Astrocyte of the cerebellum (primary cell): ENCODE measurements at regions of chr3 and their contacts with region 1.

Region 1: GRCh38 chr3:42264399-42265058 is 1.5 kb downstream of the CCK start:
- DNase-seq: no peak
- H3K4me3 ChIP-seq: no peak overlapping the region
- CTCF ChIP-seq: no peak

Region 2: GRCh38 chr3:41933146-41933676 is 331.3 kb before region 1 on chr3:
- in situ Hi-C with region 1: no loop called
- DNase-seq: peak; percentile 79
- H3K4me3 ChIP-seq: no peak overlapping the region
- CTCF ChIP-seq: no peak

Region 3: DNA sequence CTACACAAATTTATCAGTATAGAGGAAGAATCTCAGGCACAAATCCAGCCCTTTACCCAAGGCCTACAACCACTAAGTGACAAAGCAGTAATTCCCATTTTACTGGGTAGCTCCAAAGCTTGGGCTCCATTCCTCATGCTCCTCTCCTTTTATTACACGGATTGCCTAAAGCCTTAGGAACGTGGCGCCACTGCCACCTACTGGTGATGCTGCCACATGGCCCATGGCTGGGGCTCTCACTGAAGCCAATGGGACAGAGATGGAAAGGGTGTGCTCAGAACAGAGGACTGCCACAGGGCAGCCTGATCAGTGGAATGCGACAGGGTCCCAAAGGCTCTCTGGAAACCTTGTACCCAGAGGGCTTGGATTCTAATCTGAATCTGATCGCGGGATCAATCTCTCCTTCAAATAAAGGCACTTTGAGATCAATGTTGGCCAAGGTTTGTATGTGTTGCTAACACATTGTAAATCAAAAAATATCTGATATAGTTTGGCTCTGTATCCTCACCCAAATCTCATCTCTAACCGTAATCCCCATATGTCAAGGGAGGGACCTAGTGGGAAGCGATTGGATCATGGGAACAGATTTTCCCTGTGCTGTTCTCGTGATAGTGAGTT is 179.4 kb after region 1 on chr3:
- in situ Hi-C with region 1: loop called (anchors 25 kb)
- DNase-seq: peak; percentile 49
- H3K4me3 ChIP-seq: no peak overlapping the region
- CTCF ChIP-seq: peak; percentile 99